Dendritic cell treated with granulocyte-macrophage colony-stimulating factor and Interleukin-4, amounts not matched to agents 40 ng/mL and 50 ng/mL, for 4 days (primary cell): ENCODE measurements at regions of chr12 and their contacts with region 1.

Region 1: GRCh38 chr12:879641-880040 is 69.9 kb downstream of the RAD52 start:
- H3K4me3 Mint-ChIP-seq: no peak overlapping the region
- H3K27ac Mint-ChIP-seq: no peak overlapping the region
- H3K4me1 Mint-ChIP-seq: no peaks in the 10 kb centered on the region
- H3K27me3 Mint-ChIP-seq: no peaks in the 10 kb centered on the region

Region 2: GRCh38 chr12:304805-305204 is 574.8 kb before region 1 on chr12:
- intact Hi-C with region 1: loop called (anchors 10 kb)
- H3K4me3 Mint-ChIP-seq: no peak overlapping the region
- H3K27ac Mint-ChIP-seq: no peak overlapping the region
- H3K4me1 Mint-ChIP-seq: peaks cover 12% of the 10 kb centered on the region
- H3K27me3 Mint-ChIP-seq: no peaks in the 10 kb centered on the region

Region 3: DNA sequence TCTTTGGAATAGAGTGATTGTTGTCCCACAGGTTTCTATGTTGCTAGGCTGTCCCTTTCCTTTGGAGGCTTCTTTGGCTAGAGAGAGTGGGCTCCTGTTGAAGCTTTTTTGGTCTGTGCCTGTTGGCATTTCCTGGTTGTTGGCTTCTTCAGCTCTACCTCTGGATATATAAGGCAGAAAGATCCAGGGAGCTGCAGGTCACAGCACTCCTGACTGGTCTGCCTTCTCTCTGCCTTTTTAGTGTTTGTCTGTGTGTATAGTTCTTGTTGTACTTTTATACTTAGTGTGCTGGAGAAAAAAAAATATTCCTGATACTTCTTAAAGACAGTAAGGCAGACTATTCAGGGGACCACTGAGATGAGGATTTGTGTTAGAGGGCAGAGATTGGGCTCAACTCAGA is 512.1 kb after region 1 on chr12:
- intact Hi-C with region 1: no loop called
- H3K4me3 Mint-ChIP-seq: no peak overlapping the region
- H3K27ac Mint-ChIP-seq: no peak overlapping the region
- H3K4me1 Mint-ChIP-seq: no peaks in the 10 kb centered on the region
- H3K27me3 Mint-ChIP-seq: no peaks in the 10 kb centered on the region